Activated CD8-positive, alpha-beta memory T cell treated with anti-CD3 and anti-CD28 coated beads, Interleukin-2, amount 10 ng/mL, durations not matched to agents 7 days and 5 days (primary cell): ENCODE measurements at regions of chr11 and their contacts with region 1.

Region 1: DNA sequence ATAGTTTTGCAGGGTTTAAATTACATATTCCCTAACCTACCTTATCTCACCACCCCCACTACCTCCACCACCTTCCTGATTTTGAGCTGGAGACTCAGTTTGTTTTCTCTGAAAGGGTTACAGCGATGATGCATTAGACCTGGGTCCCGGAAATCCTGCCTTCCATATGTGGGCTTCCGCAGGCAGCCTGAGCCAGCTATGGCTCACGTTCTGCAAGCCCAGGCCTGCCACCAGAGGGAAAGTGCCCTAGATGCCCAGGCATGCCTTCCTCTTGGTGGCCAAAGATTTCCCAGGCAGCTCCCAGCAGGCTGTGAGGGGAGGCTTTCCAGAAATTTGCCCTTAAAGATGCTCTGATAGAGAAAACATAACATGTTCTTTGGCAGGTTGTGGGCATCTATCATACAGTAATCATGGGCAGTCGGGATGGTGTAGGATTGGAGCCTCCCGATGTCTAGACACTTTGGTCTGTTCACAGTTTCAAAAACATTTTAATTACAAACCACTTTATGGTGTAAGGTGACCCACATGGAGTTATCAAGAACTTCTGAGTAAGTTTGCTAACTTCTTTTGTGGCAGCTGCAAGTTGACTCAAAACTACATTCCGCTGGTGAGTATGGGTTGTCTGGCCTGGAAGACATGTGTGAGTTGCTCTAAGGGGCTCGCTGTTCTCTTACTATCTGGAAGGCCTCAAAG is 79.3 kb downstream of the MICAL2 start:
- DNase-seq: peak; percentile 66
- ATAC-seq: peak; percentile 71
- H3K4me3 Mint-ChIP-seq: peak overlapping the region; percentile 33
- H3K27ac Mint-ChIP-seq: peak overlapping the region; percentile 71
- H3K4me1 Mint-ChIP-seq: peaks cover 53% of the 10 kb centered on the region
- H3K27me3 Mint-ChIP-seq: no peaks in the 10 kb centered on the region

Region 2: DNA sequence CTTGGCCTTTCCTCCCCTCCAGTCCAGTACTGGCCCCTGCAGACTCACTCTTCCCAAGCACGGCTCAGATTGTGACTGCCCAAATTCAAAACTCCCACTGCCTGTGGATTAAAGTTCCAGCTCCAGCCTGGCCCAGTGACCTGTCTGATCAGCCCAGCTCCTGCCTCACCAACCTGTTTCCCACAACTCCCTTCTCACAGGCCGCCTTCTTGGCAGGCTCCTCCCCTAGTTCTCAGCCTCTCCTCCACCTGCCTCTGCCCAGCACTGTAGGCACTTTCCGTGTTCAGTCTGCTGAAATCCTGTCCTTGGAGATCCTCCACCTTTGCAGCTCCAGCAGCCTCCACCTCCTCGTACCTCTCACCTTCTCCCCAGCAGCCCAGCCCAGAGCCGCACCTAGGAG is 10.7 kb before region 1 on chr11:
- CTCF ChIA-PET with region 1: interaction called, 13 read pairs
- DNase-seq: no peak
- ATAC-seq: no peak
- H3K4me3 Mint-ChIP-seq: no peak overlapping the region
- H3K27ac Mint-ChIP-seq: peak overlapping the region; percentile 38
- H3K4me1 Mint-ChIP-seq: peaks cover 65% of the 10 kb centered on the region
- H3K27me3 Mint-ChIP-seq: no peaks in the 10 kb centered on the region